Endothelial cell of umbilical vein (primary cell): ENCODE measurements at regions of chr10 and their contacts with region 1.

Region 1: DNA sequence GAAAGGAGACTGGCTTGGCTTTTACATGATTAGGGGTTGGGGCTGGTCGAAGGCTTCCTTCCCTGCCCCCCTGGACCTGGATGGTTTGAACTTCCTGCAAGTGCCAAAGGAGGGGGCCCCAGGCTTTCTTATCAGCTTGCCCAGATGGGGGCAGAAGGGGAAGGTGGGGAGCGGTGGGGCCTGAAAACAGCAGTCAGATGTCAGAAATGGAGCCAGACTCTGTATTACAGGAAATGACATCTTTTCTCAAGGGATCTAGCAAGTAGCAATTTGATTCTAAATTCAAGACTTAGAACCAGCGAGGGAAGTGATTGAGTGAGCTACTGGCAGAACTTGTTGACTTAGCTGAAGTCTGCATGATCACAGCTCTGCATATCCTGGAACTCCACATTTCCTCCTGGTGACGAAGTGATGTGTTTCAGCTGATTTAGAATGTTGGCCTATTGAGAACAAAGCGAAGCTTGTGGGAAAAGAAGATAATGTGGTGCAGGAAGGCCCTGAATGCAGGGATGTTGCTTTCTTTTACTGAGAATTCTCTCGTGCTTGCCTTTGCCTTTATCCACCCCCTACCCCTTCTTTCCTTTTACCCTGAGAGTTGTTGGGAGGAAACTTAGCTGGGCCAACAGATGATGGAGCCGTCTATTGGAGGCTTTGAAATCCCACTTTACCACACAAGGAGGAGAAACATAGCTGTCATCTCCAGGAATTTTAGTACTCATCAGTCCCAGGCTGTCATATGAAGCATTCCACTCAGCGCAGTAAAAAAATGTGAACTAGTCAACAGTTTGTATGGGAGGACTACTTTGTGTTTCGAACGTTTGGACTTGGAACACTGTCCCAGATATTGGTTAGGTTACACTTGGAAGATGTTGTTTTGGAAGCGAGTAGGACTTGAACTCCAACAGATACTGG is 43.2 kb downstream of the CCNY start:
- DNase-seq: peak; percentile 99
- H3K4me3 ChIP-seq: peak overlapping the region in 1 of 3 experiments; percentile 41
- H3K27ac ChIP-seq: peak overlapping the region; percentile 97
- H3K4me1 ChIP-seq: peaks cover 51% of the 10 kb centered on the region
- H3K27me3 ChIP-seq: no peaks in the 10 kb centered on the region
- CTCF ChIP-seq: peak; percentile 7 to 16
- POLR2A ChIP-seq: no peak

Region 2: DNA sequence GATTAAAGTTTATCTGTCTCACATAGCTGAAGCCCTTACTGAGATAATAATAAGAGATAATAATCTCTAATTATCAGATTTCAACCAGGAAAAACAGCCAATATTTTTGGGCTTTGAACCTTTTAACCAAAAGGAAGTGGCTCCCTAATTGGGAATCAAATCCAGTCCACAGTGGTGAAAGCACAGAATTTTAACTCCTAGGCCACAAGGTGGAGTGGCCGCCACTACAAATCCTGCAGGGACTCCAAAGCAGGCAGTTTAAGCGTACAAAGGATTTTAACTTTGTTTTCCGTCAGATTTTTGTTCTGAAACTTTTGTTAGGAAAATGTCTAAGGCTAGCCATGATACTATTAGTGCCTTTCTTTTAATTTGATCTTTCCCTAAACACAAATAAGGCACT is 142.7 kb before region 1 on chr10:
- CTCF ChIA-PET with region 1: interaction called, 14 read pairs
- POLR2A ChIA-PET with region 1: no interaction called
- dilution Hi-C with region 1: no loop called
- intact Hi-C with region 1: loop called (anchors 1 kb)
- DNase-seq: peak; percentile 26
- H3K4me3 ChIP-seq: no peak overlapping the region
- H3K27ac ChIP-seq: no peak overlapping the region
- H3K4me1 ChIP-seq: no peaks in the 10 kb centered on the region
- H3K27me3 ChIP-seq: no peaks in the 10 kb centered on the region
- CTCF ChIP-seq: peak; percentile 12 to 35
- POLR2A ChIP-seq: no peak

Region 3: DNA sequence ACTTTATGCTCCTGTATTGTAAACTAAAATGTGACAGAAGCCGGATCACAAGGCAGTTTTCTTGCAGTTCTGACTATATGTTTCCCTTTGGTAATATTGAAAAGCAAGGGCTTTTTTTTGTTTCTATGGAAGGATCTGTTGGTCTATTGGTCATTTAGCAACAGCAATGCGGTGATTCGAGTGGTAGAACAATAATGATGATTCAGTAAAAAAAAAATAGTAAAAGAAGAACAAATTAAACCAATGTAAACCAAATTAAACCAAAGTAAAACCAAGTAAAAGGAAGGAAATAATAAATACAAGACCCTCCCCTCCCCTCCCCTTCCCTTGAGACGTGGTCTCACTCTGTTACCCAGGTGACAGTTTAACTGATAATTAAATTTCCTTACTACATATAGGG is 60.9 kb before region 1 on chr10:
- CTCF ChIA-PET with region 1: no interaction called
- POLR2A ChIA-PET with region 1: no interaction called
- dilution Hi-C with region 1: no loop called
- intact Hi-C with region 1: no loop called
- DNase-seq: no peak
- H3K4me3 ChIP-seq: no peak overlapping the region
- H3K27ac ChIP-seq: no peak overlapping the region
- H3K4me1 ChIP-seq: no peaks in the 10 kb centered on the region
- H3K27me3 ChIP-seq: no peaks in the 10 kb centered on the region
- CTCF ChIP-seq: no peak
- POLR2A ChIP-seq: no peak

Region 4: GRCh38 chr10:35336084-35336831 is 43.2 kb before region 1 on chr10 and contains the start of gene CCNY:
- CTCF ChIA-PET with region 1: interaction called, 5 read pairs
- POLR2A ChIA-PET with region 1: interaction called, 3 read pairs
- dilution Hi-C with region 1: no loop called
- intact Hi-C with region 1: loop called (anchors 1 kb)
- DNase-seq: peak; percentile 67
- H3K4me3 ChIP-seq: peak within 1 kb of the TSS; percentile 72 to 97 (median 94)
- H3K27ac ChIP-seq: peak within 1 kb of the TSS; percentile 63
- H3K4me1 ChIP-seq: peaks cover 45% of the 10 kb centered on the region
- H3K27me3 ChIP-seq: no peaks in the 10 kb centered on the region
- CTCF ChIP-seq: no peak
- POLR2A ChIP-seq: peak; percentile 62
- total RNA-seq, gene CCNY: 99.3 and 107 TPM in 2 replicates

Region 5: DNA sequence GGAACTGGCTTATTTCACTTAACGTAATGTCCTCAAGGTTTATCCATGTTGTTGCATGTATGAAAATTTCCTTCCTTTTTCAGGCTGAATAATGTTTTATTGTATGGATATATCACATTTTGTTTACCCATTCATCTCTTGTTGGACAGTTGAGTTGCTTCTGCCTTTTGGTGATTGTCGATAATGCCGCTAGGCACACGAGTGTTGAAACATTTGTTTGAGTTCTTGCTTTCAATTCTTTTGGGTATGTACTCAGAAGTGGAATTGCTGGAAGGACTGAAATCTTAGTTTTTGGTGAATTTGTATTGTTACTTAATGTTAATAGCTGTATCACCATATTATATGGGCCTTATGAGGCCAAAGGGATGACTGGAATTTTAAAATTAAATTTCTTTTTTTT is 19.6 kb before region 1 on chr10:
- CTCF ChIA-PET with region 1: no interaction called
- POLR2A ChIA-PET with region 1: no interaction called
- dilution Hi-C with region 1: no loop called
- intact Hi-C with region 1: no loop called
- DNase-seq: no peak
- H3K4me3 ChIP-seq: no peak overlapping the region
- H3K27ac ChIP-seq: no peak overlapping the region
- H3K4me1 ChIP-seq: no peaks in the 10 kb centered on the region
- H3K27me3 ChIP-seq: no peaks in the 10 kb centered on the region
- CTCF ChIP-seq: no peak
- POLR2A ChIP-seq: no peak

Region 6: GRCh38 chr10:35409094-35409582 is 29.7 kb after region 1 on chr10:
- CTCF ChIA-PET with region 1: interaction called, 10 read pairs
- POLR2A ChIA-PET with region 1: no interaction called
- dilution Hi-C with region 1: no loop called
- intact Hi-C with region 1: no loop called
- DNase-seq: peak; percentile 77
- H3K4me3 ChIP-seq: no peak overlapping the region
- H3K27ac ChIP-seq: peak overlapping the region; percentile 38
- H3K4me1 ChIP-seq: peaks cover 32% of the 10 kb centered on the region
- H3K27me3 ChIP-seq: no peaks in the 10 kb centered on the region
- CTCF ChIP-seq: no peak
- POLR2A ChIP-seq: no peak

Region 7: DNA sequence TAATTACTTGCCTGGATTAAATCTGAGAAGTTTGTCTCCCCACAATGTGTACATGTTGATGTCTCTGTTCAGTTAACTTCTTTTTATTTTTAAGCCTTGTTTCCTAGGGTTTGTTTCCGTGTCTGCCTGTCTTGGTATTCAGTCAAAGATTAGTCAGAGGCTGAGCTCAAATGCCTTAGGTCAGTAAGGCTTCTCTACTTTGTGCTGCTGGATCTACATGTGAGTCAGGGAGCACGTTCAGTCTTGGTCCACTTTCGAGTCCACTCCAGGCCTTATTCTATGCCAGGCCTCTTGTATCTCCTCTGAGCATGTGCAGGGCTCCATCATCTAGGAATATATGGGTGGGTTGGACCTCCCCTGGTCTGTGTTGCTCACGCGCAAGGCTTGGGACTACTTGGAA is 355.9 kb after region 1 on chr10:
- CTCF ChIA-PET with region 1: no interaction called
- POLR2A ChIA-PET with region 1: no interaction called
- dilution Hi-C with region 1: no loop called
- intact Hi-C with region 1: no loop called
- DNase-seq: no peak
- H3K4me3 ChIP-seq: no peak overlapping the region
- H3K27ac ChIP-seq: no peak overlapping the region
- H3K4me1 ChIP-seq: no peaks in the 10 kb centered on the region
- H3K27me3 ChIP-seq: peaks cover 0 to 1% of the 10 kb centered on the region in 2 experiments
- CTCF ChIP-seq: no peak
- POLR2A ChIP-seq: no peak